ENCODE measurements at regions of chr20 and their contacts with region 1.

Region 1: DNA sequence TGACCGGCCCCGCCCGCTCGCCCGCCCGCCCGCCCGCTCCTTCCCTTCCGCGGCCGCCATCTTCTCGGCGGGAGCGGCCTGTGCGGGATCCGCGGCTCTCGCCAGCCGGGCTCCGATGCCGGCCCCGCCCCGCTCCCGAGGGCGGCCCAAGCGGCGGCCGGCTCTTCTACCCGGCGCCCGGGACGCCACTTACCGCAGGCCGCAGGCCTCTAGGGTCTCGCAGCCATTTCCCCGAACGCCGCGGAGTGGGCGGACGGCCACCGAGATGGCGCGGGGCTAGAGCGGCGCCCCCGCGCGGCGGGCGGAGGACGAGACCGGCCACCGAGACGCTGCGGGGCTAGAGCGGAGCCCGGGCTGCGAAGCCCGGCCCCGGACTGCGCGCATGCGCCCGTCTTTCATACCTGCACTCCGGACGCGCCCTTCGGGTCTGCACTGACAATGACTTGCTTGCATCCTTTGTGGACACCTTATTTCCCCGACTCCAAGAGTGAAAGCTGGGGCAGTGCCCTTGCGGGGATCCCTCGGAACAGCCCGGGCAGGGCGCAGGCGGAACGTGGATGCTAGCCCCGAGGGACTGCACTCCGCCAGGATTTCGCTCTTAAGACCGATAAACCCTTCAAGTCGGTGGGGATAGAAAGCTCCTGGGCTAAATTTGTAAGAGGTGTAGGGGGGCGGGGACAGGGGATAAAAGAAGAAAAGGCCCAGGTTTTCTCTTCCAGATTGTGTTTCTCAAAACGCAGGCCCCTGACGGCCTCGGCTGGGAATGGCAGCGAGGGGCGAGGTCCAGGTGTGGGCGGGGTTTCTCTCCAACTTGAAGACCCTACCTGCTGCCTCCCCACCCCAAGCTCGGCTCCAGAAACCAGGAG is at the start of gene DIDO1:
- DNase-seq: peak; percentile 87
- ATAC-seq: peak; percentile 54
- H3K4me3 Mint-ChIP-seq: peak within 1 kb of the TSS; percentile 95
- H3K27ac Mint-ChIP-seq: peak within 1 kb of the TSS; percentile 96
- H3K4me1 Mint-ChIP-seq: peaks cover 63% of the 10 kb centered on the region
- H3K27me3 Mint-ChIP-seq: no peaks in the 10 kb centered on the region; the same call in 1 of the 2 replicates
- CTCF ChIP-seq: peak; percentile 62; the same call in 1 of the 2 replicates
- total RNA-seq, gene DIDO1: 69.3 to 87.3 TPM (median 71.6 TPM) in 3 replicates

Region 2: DNA sequence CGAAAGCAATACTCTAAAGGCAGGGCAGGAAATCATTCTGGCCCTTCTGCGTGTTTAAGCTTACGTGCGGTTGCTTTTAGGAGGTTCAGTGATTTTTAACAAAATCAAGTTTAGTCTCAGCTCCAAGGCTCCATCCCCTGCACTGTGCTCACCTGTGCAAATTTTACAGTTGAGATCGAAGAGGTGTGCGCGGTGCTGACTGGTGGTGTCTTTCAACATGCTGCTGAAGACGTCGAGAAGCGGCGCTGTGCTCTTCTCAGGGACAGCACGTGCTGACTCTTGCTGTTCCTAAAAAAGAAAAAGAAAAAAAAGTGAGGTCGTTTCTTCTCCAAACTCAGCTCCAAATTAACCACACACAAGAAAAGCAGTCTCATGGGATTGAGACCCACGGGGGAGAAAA is 32.2 kb before region 1 on chr20:
- CTCF ChIA-PET with region 1: no interaction called
- POLR2A ChIA-PET with region 1: no interaction called
- DNase-seq: no peak
- ATAC-seq: no peak
- H3K4me3 Mint-ChIP-seq: no peak overlapping the region
- H3K27ac Mint-ChIP-seq: peak overlapping the region; percentile 53; the same call in 1 of the 2 replicates
- H3K4me1 Mint-ChIP-seq: peaks cover 15% of the 10 kb centered on the region
- H3K27me3 Mint-ChIP-seq: no peaks in the 10 kb centered on the region; the same call in 1 of the 2 replicates
- CTCF ChIP-seq: no peak

Region 3: DNA sequence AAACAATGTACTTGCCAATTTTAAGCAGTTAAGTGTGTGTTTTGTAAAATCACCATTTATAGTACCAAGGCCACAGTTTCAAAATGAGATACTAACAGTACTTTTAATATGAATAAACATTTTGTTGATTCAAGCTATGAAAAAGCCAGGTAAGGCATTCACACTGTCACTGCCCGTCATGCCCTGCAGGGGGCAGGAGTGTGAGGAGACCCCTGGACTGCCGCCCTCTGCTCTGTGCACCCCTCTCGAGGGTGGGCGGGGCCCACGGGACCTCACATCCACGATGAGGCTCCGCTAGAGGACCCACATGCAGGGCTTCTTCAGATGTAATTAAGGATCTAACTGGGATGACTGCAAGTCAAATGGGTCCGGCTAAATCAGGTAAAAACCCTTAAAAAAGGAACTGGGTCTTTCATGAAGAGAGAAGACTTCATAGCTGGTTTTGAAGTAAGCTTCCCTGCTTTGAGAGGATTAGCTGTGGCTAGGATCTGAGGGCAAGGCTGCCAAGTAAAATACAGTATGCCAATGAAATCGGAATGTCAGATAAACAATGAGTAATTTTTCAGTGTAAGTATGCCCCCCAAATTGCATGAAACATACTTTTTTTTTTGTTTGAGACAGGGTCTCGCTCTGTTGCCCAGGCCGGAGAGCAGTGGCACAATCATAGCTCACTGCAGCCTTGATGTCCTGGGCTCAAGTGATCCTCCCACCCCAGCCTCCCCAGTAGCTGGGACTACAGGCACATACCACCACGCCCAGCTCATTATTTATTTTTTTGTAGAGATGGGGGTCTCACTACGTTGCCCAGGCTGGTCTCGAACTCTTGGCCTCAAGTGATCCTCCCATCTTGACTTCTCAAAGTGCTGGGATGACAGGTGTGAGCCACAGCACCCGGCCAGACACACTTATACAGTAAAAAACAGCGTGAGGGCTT is 18.8 kb before region 1 on chr20:
- CTCF ChIA-PET with region 1: interaction called, 24 read pairs
- POLR2A ChIA-PET with region 1: no interaction called
- DNase-seq: peak; percentile 61
- ATAC-seq: peak; percentile 81
- H3K4me3 Mint-ChIP-seq: no peak overlapping the region
- H3K27ac Mint-ChIP-seq: peak overlapping the region; percentile 92
- H3K4me1 Mint-ChIP-seq: peaks cover 3% of the 10 kb centered on the region
- H3K27me3 Mint-ChIP-seq: no peaks in the 10 kb centered on the region
- CTCF ChIP-seq: peak; percentile 63

Region 4: DNA sequence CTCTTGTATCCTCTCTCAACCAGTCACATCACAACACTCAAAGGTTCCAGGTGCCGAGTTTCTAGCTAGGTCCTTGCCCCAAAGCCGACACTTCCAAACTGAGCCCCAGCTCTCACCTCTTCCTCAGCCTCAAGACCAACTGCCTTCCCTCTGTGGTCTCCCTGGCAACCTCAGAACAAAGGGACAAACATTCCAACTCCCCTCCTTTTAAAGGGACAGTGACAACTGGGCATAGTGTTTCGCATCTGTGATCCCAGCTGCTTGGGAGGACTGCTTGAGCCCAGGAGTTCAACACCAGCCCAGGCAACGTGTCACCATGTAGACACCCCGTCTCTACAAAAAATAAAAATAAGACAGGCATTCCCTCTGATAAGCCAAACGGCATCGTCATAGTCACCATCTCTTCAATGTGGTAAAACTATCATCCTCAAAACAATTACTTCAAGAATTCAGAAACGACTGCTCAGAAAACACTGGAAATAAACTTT is 11.5 kb before region 1 on chr20:
- CTCF ChIA-PET with region 1: interaction called, 18 read pairs
- POLR2A ChIA-PET with region 1: interaction called, 3 read pairs
- DNase-seq: peak; percentile 61
- ATAC-seq: peak; percentile 70
- H3K4me3 Mint-ChIP-seq: peak overlapping the region; percentile 46
- H3K27ac Mint-ChIP-seq: peak overlapping the region; percentile 97
- H3K4me1 Mint-ChIP-seq: peaks cover 59% of the 10 kb centered on the region
- H3K27me3 Mint-ChIP-seq: no peaks in the 10 kb centered on the region
- CTCF ChIP-seq: no peak

Region 5: DNA sequence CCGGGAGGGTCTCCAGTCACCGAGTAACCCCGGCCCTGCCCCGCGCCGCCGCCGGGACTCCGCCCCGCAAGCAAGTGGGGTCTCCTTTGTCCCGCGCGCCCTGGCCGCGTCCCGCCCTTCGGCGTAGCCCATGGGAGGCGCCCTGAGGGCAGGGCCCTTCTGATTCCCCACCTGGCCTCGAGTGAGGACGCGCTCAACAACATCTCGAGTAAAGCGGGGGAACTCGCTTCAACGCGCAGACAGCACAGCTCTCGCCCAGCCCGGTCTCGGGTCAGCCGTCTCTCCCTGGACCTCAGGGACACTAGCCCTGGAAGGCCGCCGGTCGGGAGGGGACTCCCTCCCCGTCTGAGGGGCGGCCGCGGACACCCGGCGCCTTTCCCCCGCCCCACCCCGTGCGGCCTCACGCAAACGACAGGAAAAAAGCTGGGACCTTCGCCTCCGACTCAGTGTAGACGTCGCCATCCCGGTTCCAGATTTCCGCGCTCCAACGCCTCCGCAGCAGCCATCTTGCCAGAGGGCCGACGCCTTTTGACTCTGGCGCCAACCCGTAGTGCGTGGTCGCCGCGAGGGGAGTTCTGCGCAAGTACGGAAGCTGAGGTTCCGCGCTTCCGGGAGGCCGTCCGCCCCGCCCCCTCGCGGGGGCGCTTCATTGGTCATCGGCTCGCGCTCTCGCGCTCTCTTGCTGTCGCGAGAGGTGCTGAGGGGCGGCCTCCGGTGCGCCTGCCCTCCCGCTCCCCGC is 11.1 kb after region 1 on chr20:
- CTCF ChIA-PET with region 1: interaction called, 16 read pairs
- POLR2A ChIA-PET with region 1: interaction called, 53 read pairs
- DNase-seq: peak; percentile 97
- ATAC-seq: peak; percentile 87
- H3K4me3 Mint-ChIP-seq: no peak overlapping the region
- H3K27ac Mint-ChIP-seq: peak overlapping the region; percentile 97
- H3K4me1 Mint-ChIP-seq: peaks cover 24% of the 10 kb centered on the region
- H3K27me3 Mint-ChIP-seq: no peaks in the 10 kb centered on the region
- CTCF ChIP-seq: no peak

Measured in WTC11 (cell line).